Activated CD8-positive, alpha-beta T cell treated with anti-CD3 and anti-CD28 coated beads for 36 hours (primary cell): ENCODE measurements at regions of chr2 and their contacts with region 1.

Region 1: GRCh38 chr2:24971536-24972314 is at the start of gene DNAJC27:
- DNase-seq: peak; percentile 98
- ATAC-seq: peak; percentile 94
- H3K4me3 Mint-ChIP-seq: peak within 1 kb of the TSS; percentile 98
- H3K27ac Mint-ChIP-seq: peak within 1 kb of the TSS; percentile 100
- H3K4me1 Mint-ChIP-seq: peaks cover 14% of the 10 kb centered on the region
- H3K27me3 Mint-ChIP-seq: no peaks in the 10 kb centered on the region
- CTCF ChIP-seq: no peak
- total RNA-seq, gene DNAJC27: 5.2 to 6.6 TPM

Region 2: GRCh38 chr2:24920098-24920808 is 51.5 kb before region 1 on chr2 and contains the start of gene ADCY3:
- CTCF ChIA-PET with region 1: no interaction called
- POLR2A ChIA-PET with region 1: no interaction called
- intact Hi-C with region 1: no loop called
- DNase-seq: peak; percentile 78
- ATAC-seq: peak; percentile 60
- H3K4me3 Mint-ChIP-seq: peak within 1 kb of the TSS; percentile 89
- H3K27ac Mint-ChIP-seq: peak within 1 kb of the TSS; percentile 88
- H3K4me1 Mint-ChIP-seq: peaks cover 33% of the 10 kb centered on the region
- H3K27me3 Mint-ChIP-seq: no peaks in the 10 kb centered on the region
- CTCF ChIP-seq: no peak
- total RNA-seq, gene ADCY3: 46.3 to 47.9 TPM

Region 3: DNA sequence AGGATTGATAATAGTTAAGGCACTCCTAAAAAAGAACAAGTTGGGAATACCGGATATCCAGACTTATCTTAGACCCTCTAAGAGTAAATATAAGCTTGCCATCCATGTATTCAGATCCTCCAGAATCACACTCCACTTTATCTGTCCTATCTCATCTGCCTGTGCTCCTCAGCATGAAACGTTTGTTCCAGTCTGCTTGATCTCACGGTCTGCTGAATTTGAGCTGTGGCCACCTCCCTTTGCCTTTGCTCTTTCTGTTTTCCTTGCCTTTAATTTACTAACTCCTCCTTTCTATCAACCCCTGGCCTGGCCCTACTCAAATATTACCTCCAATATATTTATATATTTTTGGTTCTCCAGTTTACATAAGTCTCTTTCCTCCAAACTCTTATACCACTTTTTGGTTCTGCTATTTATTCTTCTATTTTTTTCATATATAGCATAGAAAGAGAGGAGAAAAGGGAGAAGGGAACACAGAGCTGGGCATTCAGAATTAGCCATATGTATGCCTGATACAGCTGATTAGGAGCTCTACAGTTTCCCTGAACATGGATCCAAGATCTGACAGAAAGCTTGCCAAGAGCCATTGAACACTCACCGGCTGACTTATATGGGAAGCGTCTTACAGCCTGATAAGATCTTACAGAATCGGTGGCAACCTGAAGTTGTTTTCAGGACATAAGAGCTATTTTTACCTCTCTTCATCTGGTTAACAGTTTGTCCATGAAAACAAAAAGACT is 21.9 kb after region 1 on chr2:
- CTCF ChIA-PET with region 1: interaction called, 22 read pairs
- POLR2A ChIA-PET with region 1: no interaction called
- intact Hi-C with region 1: no loop called
- DNase-seq: no peak
- ATAC-seq: no peak
- H3K4me3 Mint-ChIP-seq: no peak overlapping the region
- H3K27ac Mint-ChIP-seq: no peak overlapping the region
- H3K4me1 Mint-ChIP-seq: no peaks in the 10 kb centered on the region
- H3K27me3 Mint-ChIP-seq: peaks cover 15% of the 10 kb centered on the region
- CTCF ChIP-seq: no peak

Region 4: GRCh38 chr2:25119263-25119662 is 147.5 kb after region 1 on chr2:
- CTCF ChIA-PET with region 1: interaction called, 13 read pairs
- POLR2A ChIA-PET with region 1: no interaction called
- intact Hi-C with region 1: no loop called
- DNase-seq: no peak
- ATAC-seq: no peak
- H3K4me3 Mint-ChIP-seq: no peak overlapping the region
- H3K27ac Mint-ChIP-seq: no peak overlapping the region
- H3K4me1 Mint-ChIP-seq: no peaks in the 10 kb centered on the region
- H3K27me3 Mint-ChIP-seq: peaks cover 6% of the 10 kb centered on the region
- CTCF ChIP-seq: no peak

Region 5: GRCh38 chr2:25165992-25166875 is 194.5 kb after region 1 on chr2:
- CTCF ChIA-PET with region 1: interaction called, 18 read pairs
- POLR2A ChIA-PET with region 1: interaction called, 3 read pairs
- intact Hi-C with region 1: no loop called
- DNase-seq: peak; percentile 67
- ATAC-seq: peak; percentile 74
- H3K4me3 Mint-ChIP-seq: no peak overlapping the region
- H3K27ac Mint-ChIP-seq: peak overlapping the region; percentile 10
- H3K4me1 Mint-ChIP-seq: peaks cover 23% of the 10 kb centered on the region
- H3K27me3 Mint-ChIP-seq: peaks cover 41% of the 10 kb centered on the region
- CTCF ChIP-seq: peak; percentile 64